ENCODE measurements at regions of chr11 and their contacts with region 1.

Region 1: GRCh38 chr11:121311373-121311772 is 18.8 kb downstream of the SC5D start:
- DNase-seq: no peak
- H3K4me3 ChIP-seq: no peak overlapping the region
- H3K4me3 Mint-ChIP-seq: no peak overlapping the region
- H3K27ac Mint-ChIP-seq: no peak overlapping the region
- H3K4me1 ChIP-seq: peaks cover 10% of the 10 kb centered on the region
- H3K4me1 Mint-ChIP-seq: no peaks in the 10 kb centered on the region
- H3K27me3 ChIP-seq: no peaks in the 10 kb centered on the region
- H3K27me3 Mint-ChIP-seq: no peaks in the 10 kb centered on the region
- CTCF ChIP-seq: no peak

Region 2: GRCh38 chr11:121300313-121300971 is 10.9 kb before region 1 on chr11:
- CTCF ChIA-PET with region 1: no interaction called
- POLR2A ChIA-PET with region 1: no interaction called
- intact Hi-C with region 1: loop called (anchors 1 kb)
- DNase-seq: no peak
- H3K4me3 ChIP-seq: no peak overlapping the region
- H3K4me3 Mint-ChIP-seq: no peak overlapping the region
- H3K27ac Mint-ChIP-seq: no peak overlapping the region
- H3K4me1 ChIP-seq: no peaks in the 10 kb centered on the region
- H3K4me1 Mint-ChIP-seq: peaks cover 11% of the 10 kb centered on the region
- H3K27me3 ChIP-seq: no peaks in the 10 kb centered on the region
- H3K27me3 Mint-ChIP-seq: no peaks in the 10 kb centered on the region
- CTCF ChIP-seq: no peak

Region 3: GRCh38 chr11:121328967-121329679 is 17.8 kb after region 1 on chr11:
- CTCF ChIA-PET with region 1: no interaction called
- POLR2A ChIA-PET with region 1: no interaction called
- intact Hi-C with region 1: no loop called
- DNase-seq: no peak
- H3K4me3 ChIP-seq: no peak overlapping the region
- H3K4me3 Mint-ChIP-seq: no peak overlapping the region
- H3K27ac Mint-ChIP-seq: no peak overlapping the region
- H3K4me1 ChIP-seq: peaks cover 10% of the 10 kb centered on the region
- H3K4me1 Mint-ChIP-seq: no peaks in the 10 kb centered on the region
- H3K27me3 ChIP-seq: no peaks in the 10 kb centered on the region
- H3K27me3 Mint-ChIP-seq: no peaks in the 10 kb centered on the region
- CTCF ChIP-seq: no peak

Region 4: DNA sequence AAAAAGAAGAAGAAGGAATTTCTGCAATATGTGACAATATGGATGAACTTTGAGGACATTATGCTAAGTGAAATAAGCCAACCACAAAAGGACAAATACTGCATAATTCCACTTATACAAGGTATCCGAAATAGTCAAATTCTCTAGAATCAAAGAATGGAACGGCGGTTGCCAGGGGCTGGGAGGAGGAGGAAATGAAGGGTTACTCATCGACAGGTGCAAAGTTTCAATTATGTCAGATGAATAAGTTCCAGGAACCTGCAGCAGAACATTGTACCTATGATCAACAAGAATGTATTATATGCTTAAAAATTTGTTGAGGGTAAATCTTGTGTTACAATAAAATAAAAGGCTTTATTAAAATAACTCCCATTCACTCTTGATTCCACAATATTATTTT is 30.2 kb after region 1 on chr11:
- CTCF ChIA-PET with region 1: no interaction called
- POLR2A ChIA-PET with region 1: no interaction called
- intact Hi-C with region 1: no loop called
- DNase-seq: no peak
- H3K4me3 ChIP-seq: no peak overlapping the region
- H3K4me3 Mint-ChIP-seq: no peak overlapping the region
- H3K27ac Mint-ChIP-seq: no peak overlapping the region
- H3K4me1 ChIP-seq: no peaks in the 10 kb centered on the region
- H3K4me1 Mint-ChIP-seq: no peaks in the 10 kb centered on the region
- H3K27me3 ChIP-seq: no peaks in the 10 kb centered on the region; the same call in 1 of the 2 replicates
- H3K27me3 Mint-ChIP-seq: peaks cover 11% of the 10 kb centered on the region
- CTCF ChIP-seq: no peak